WTC11 (cell line): ENCODE measurements at regions of chr22 and their contacts with region 1.

Region 1: GRCh38 chr22:29524440-29525191 is 28.9 kb downstream of the THOC5 start:
- DNase-seq: peak; percentile 61
- ATAC-seq: peak; percentile 93
- H3K4me3 Mint-ChIP-seq: no peak overlapping the region
- H3K27ac Mint-ChIP-seq: no peak overlapping the region
- H3K4me1 Mint-ChIP-seq: no peaks in the 10 kb centered on the region
- H3K27me3 Mint-ChIP-seq: no peaks in the 10 kb centered on the region
- CTCF ChIP-seq: 0 out of 2 replicates have a peak, but pooled peaks have one; percentile 30

Region 2: DNA sequence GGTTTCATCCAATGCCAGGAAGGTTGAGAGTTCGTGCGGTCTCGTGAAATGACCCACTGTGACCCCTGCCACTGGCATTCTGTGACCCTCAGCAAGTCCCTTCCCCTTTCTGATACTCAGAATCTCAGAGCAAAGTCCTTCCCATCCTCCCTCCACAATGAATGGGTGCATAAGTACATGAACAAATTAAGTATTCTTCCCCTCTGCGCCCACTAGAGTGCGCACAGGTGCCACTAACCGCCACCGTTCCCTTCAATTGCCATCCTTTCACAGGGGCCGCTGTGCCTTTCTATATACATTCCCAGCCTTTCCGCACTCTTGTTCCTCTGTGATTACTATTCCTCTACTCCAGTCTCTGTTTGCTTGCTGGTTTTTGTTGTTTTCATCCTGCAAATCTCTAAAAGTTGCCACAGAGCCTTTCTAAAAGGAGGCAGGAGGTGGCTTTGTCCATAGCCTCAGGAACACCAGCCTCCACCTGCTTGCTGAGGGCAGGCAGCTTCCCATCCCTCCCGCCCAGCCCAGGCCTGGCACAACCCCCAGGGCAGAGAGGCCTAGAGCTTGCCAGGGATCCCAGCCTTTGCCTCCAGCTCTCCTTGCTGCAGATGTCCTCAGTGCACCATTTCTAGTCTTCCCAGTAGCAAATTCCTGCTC is 129.6 kb before region 1 on chr22:
- CTCF ChIA-PET with region 1: interaction called, 42 read pairs
- POLR2A ChIA-PET with region 1: no interaction called
- DNase-seq: peak; percentile 77
- ATAC-seq: peak; percentile 98
- H3K4me3 Mint-ChIP-seq: no peak overlapping the region
- H3K27ac Mint-ChIP-seq: no peak overlapping the region
- H3K4me1 Mint-ChIP-seq: no peaks in the 10 kb centered on the region
- H3K27me3 Mint-ChIP-seq: no peaks in the 10 kb centered on the region
- CTCF ChIP-seq: peak; percentile 41; the same call in 1 of the 2 replicates

Region 3: DNA sequence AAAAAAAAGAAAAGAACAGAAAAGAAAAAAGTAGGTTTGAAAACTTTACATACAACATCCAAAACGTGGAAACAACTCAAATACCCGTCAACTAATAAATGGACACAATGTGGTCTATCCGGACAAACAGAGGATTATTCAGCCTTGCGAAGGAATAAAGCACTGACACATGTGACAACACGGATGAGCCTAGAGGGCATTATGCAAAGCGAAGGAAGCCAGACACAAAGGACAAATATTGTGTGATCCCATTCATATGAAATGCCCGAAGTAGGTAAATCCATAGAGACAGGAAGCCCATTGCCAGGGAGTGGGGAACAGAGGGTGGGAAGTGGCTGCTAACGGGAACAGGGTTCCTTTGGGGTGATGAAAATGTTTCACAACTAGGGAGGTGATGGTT is 74.4 kb before region 1 on chr22:
- CTCF ChIA-PET with region 1: no interaction called
- POLR2A ChIA-PET with region 1: no interaction called
- DNase-seq: no peak
- ATAC-seq: no peak
- H3K4me3 Mint-ChIP-seq: no peak overlapping the region
- H3K27ac Mint-ChIP-seq: no peak overlapping the region
- H3K4me1 Mint-ChIP-seq: no peaks in the 10 kb centered on the region
- H3K27me3 Mint-ChIP-seq: no peaks in the 10 kb centered on the region
- CTCF ChIP-seq: no peak

Region 4: GRCh38 chr22:29480512-29481264 is 43.9 kb before region 1 on chr22:
- CTCF ChIA-PET with region 1: interaction called, 11 read pairs
- POLR2A ChIA-PET with region 1: no interaction called
- DNase-seq: peak; percentile 64
- ATAC-seq: peak; percentile 14
- H3K4me3 Mint-ChIP-seq: peak overlapping the region; percentile 78
- H3K27ac Mint-ChIP-seq: no peak overlapping the region
- H3K4me1 Mint-ChIP-seq: peaks cover 42% of the 10 kb centered on the region
- H3K27me3 Mint-ChIP-seq: peaks cover 66% of the 10 kb centered on the region
- CTCF ChIP-seq: no peak

Region 5: GRCh38 chr22:29512031-29512430 is 12.6 kb before region 1 on chr22:
- CTCF ChIA-PET with region 1: interaction called, 11 read pairs
- POLR2A ChIA-PET with region 1: no interaction called
- DNase-seq: no peak
- ATAC-seq: no peak
- H3K4me3 Mint-ChIP-seq: no peak overlapping the region
- H3K27ac Mint-ChIP-seq: no peak overlapping the region
- H3K4me1 Mint-ChIP-seq: no peaks in the 10 kb centered on the region
- H3K27me3 Mint-ChIP-seq: no peaks in the 10 kb centered on the region
- CTCF ChIP-seq: no peak

Region 6: DNA sequence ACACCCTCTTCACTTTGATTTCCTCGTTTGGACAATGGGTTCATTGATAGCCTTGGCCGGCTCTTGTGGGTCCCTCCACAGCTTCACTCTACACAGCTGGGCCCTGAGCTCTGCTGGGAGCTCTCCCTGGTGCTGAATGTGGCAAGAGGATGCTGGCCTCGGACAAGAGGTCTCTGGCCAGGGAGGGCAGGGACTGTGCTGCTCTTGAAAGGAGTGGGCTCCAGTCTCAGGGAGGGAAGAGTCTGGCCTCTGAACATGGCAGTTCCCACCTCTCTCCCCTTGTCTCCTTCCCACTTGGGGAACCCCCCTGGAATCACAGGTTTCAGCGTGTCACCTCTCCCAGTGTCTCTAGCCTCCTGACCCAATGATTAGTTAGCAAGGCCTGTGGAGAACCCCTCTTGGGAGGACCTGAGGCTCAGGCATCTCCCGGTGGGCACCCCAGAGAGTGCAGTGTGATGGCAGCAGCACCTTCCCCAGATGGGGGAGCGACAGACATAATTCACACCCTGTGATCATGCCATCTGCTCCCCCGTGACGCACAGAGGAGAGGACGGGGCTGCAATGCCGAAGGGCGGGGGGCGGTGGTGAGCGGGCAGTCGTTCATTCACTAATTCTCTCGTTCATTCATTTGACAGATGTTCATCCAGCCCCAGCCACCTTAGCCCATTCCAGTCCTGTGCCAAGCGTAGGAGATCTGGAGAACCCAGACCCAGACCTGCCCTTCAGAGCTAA is 192.4 kb after region 1 on chr22:
- CTCF ChIA-PET with region 1: no interaction called
- POLR2A ChIA-PET with region 1: no interaction called
- DNase-seq: peak; percentile 89
- ATAC-seq: peak; percentile 79
- H3K4me3 Mint-ChIP-seq: no peak overlapping the region
- H3K27ac Mint-ChIP-seq: no peak overlapping the region
- H3K4me1 Mint-ChIP-seq: peaks cover 3% of the 10 kb centered on the region; the same call in 1 of the 2 replicates
- H3K27me3 Mint-ChIP-seq: peaks cover 50% of the 10 kb centered on the region
- CTCF ChIP-seq: no peak